Heart right ventricle (tissue), 16 donors: ENCODE measurements at regions of chr9 and their contacts with region 1.

Region 1: GRCh38 chr9:15104826-15105420 is 194.7 kb upstream of the FREM1 start:
- DNase-seq: peak in 1 of 2 donors; percentile 20
- ATAC-seq: peak in 3 of 8 donors; percentile 31 to 52 (median 38)
- H3K4me3 ChIP-seq: no peak overlapping the region
- H3K27ac ChIP-seq: no peak overlapping the region
- H3K4me1 ChIP-seq: no peaks in the 10 kb centered on the region
- H3K27me3 ChIP-seq: peaks cover 0 to 4% (median 0%) of the 10 kb centered on the region in 7 donors
- CTCF ChIP-seq: peak; percentile 27 to 77 (median 69)

Region 2: DNA sequence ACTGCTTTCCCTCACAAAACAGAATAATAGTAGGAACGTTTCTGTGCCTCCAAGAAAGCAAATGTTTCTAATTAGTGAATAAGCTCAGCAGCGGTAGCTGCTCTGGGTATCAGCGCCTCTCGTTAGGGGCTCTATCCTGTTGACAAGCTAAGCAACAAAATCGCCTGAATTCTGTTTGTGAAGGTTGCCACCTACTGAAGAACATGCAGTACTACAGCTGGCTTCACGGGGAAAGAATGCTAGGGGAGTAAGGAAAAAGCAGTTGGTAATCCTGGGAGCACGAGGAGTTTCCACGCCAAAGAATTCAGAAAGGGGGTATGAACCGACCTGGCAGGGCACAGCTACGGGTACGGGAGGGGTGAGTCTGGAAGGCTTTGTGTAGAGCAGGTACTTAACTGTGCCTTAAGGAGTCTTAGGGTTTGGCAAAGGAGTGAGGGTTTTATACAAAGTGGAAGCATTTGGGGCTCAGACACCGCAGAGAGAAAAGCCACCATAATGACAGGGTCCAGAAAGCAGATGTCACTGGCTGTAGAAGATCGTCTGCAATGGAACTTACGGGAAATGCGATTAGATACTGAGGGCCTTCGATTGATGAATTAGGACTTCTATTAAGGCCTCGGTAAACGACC is 30.4 kb after region 1 on chr9:
- intact Hi-C with region 1: loop called in 5 of 10 experiments (anchors 2 to 5 kb)
- DNase-seq: peak in 1 of 2 donors; percentile 47
- ATAC-seq: peak in 7 of 8 donors; percentile 78 to 88 (median 83)
- H3K4me3 ChIP-seq: peak overlapping the region in 3 of 10 donors; percentile 11 to 24 (median 15)
- H3K27ac ChIP-seq: peak overlapping the region in 1 of 10 donors; percentile 31
- H3K4me1 ChIP-seq: peaks cover 0 to 6% (median 0%) of the 10 kb centered on the region in 9 donors
- H3K27me3 ChIP-seq: no peaks in the 10 kb centered on the region
- CTCF ChIP-seq: peak; percentile 69 to 90 (median 89)

Region 3: GRCh38 chr9:15142878-15143534 is 38.1 kb after region 1 on chr9:
- intact Hi-C with region 1: loop called in 5 of 10 experiments (anchors 2 to 5 kb)
- DNase-seq: no peak
- ATAC-seq: peak in 5 of 8 donors; percentile 38 to 75 (median 67)
- H3K4me3 ChIP-seq: no peak overlapping the region
- H3K27ac ChIP-seq: no peak overlapping the region
- H3K4me1 ChIP-seq: peaks cover 0 to 7% (median 0%) of the 10 kb centered on the region in 9 donors
- H3K27me3 ChIP-seq: no peaks in the 10 kb centered on the region
- CTCF ChIP-seq: peak; percentile 44 to 86 (median 79)

Region 4: DNA sequence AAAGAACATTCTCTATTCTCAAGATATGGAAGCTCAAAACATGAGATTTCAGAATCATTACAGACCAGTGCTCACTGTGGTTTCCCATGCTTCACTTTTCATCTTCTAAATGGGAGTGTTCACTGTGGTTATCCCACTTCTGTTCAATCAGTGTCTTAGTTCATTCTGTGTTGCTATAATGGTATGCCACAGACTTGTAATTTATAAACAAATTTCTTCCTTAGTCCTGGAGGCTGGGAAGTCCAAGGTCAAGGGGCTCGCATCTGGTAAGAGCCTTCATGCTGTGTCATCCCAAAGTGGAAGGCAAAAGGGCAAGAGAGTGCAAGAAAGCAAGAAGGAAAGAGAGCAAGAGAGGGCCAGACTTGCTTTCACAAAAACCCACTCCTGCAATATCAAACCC is 55.8 kb after region 1 on chr9:
- intact Hi-C with region 1: no loop called
- DNase-seq: no peak
- ATAC-seq: no peak
- H3K4me3 ChIP-seq: no peak overlapping the region
- H3K27ac ChIP-seq: no peak overlapping the region
- H3K4me1 ChIP-seq: peaks cover 3 to 25% (median 20%) of the 10 kb centered on the region in 9 donors
- H3K27me3 ChIP-seq: no peaks in the 10 kb centered on the region
- CTCF ChIP-seq: no peak

Region 5: DNA sequence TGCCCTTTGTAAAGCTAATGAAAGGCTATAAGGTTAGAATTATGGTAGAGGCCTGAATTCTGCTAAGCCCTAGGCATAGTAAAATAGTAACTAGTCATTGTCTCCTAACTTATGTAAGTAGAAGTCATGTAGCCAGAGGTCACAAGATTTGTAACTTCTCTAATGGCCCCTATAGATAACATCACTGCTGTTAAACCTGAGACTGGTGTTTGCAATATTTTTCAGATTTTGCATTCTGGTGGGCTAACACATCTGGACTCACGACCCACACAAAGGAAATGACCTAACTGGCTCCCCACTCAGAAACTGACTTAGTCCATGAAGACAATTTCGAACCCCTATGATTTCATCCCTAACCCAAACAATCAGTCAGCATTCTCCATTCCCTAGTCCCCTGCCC is 239.3 kb after region 1 on chr9:
- intact Hi-C with region 1: no loop called
- DNase-seq: no peak
- ATAC-seq: no peak
- H3K4me3 ChIP-seq: no peak overlapping the region
- H3K27ac ChIP-seq: no peak overlapping the region
- H3K4me1 ChIP-seq: no peaks in the 10 kb centered on the region
- H3K27me3 ChIP-seq: peaks cover 0 to 5% (median 0%) of the 10 kb centered on the region in 7 donors
- CTCF ChIP-seq: no peak